ENCODE measurements at regions of chr5 and their contacts with region 1.

Region 1: DNA sequence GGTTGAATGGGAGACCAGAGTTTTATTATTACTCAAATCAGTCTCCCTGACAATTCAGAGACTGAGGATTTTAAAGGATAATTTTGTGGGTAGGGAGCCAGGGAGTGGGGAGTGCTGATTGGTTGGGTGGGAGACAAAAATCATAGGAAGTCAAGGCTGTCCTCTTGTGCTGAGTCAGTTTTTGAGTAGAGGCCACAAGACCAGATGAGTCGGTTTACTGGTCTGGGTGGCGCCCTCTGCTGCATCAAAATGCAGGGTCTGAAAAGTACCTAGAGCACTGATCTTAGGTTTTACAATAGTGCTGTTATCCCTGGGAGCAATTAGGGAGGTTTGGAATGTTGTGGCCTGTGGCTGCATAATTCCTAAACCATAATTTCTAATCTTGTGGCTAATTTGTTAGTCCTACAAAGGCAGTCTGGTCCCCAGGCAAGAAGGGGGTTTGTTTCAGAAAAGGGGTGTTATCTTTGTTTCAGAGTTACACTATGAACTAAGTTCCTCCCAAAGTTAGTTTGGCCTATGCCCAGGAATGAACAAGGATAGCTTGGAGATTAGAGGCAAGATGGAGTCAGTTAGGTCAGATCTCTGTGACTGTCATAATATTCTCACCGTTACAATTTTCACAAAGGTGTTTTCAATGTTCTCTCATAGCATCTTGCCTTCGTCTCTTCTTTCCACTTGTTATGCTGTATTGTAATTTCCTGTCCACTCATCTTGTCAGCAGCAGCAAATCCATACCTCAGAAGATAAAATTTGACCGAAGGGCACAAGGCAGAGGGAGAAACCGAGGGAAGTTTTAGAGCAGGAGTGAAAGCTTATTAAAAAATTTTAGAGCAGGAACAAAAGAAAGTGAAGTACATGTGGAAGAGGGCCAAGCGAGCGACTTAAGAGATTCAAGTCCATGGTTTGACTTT is 59.2 kb upstream of the CLINT1 start:
- DNase-seq: peak; percentile 56
- CTCF ChIP-seq: peak; percentile 63

Region 2: DNA sequence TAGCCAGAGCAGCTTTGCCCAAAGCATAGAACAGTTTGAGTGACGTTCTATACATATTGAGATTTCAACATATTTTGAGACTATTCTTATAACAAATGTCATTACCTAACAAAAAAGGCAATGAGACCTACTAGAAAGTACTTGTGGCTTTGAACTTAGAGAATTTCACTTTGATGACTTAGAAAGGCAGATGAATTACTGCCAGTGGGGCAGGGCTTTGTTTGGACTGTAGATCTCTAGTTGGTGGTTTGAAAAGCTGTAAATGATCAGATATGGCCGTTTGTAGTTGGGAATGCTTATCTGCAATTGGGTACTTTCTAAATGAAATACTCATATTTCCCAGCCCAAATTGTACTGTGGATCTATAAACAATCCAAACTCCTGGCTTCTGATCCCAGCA is 294.0 kb before region 1 on chr5:
- CTCF ChIA-PET with region 1: no interaction called
- POLR2A ChIA-PET with region 1: no interaction called
- DNase-seq: no peak
- CTCF ChIP-seq: no peak

Region 3: GRCh38 chr5:157877821-157878220 is 40.3 kb before region 1 on chr5:
- CTCF ChIA-PET with region 1: no interaction called
- POLR2A ChIA-PET with region 1: no interaction called
- DNase-seq: no peak
- CTCF ChIP-seq: no peak

Region 4: DNA sequence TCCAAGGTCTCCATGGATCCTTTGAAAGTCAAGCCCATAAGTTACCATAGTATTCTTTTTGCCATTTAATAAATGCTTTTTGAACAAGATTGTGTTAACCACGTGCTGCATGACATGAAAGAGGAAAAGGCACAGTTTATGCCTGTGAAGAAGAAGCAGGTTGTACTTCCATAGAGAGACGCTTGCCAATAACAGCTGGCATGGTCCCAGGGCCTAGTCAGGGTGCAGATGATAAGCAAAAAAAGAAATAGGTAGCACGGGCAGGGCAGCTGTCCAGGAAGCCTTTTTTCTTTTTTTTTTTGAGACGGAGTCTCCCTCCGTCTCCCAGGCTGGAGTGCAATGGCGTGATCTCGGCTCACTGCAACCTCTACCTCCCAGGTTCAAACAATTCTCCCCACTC is 12.6 kb after region 1 on chr5:
- CTCF ChIA-PET with region 1: interaction called, 11 read pairs
- POLR2A ChIA-PET with region 1: no interaction called
- DNase-seq: no peak
- CTCF ChIP-seq: no peak

Measured in GM10248 (cell line).